CD4-positive, alpha-beta memory T cell (primary cell): ENCODE measurements at regions of chr17 and their contacts with region 1.

Region 1: GRCh38 chr17:48457080-48457836 is 27.2 kb upstream of the SKAP1 start:
- DNase-seq: peak; percentile 78 to 82 (median 81)
- H3K4me3 ChIP-seq: peak overlapping the region in 1 of 2 donors; percentile 16
- H3K4me3 Mint-ChIP-seq: peak overlapping the region; percentile 64 to 86 (median 76)
- H3K27ac ChIP-seq: no peak overlapping the region
- H3K27ac Mint-ChIP-seq: peak overlapping the region in 5 of 7 donors; percentile 47 to 79 (median 69)
- H3K4me1 ChIP-seq: peaks cover 54% of the 10 kb centered on the region
- H3K4me1 Mint-ChIP-seq: peaks cover 39 to 61% (median 46%) of the 10 kb centered on the region in 4 donors
- H3K27me3 ChIP-seq: no peaks in the 10 kb centered on the region
- H3K27me3 Mint-ChIP-seq: peaks cover 0 to 1% of the 10 kb centered on the region in 2 donors

Region 2: GRCh38 chr17:48351831-48352332 is 105.4 kb before region 1 on chr17:
- CTCF ChIA-PET with region 1: interaction called, 77 read pairs
- POLR2A ChIA-PET with region 1: interaction called, 13 read pairs
- intact Hi-C with region 1: loop called (anchors 1 kb)
- DNase-seq: peak in 4 of 5 donors; percentile 31 to 50 (median 43)
- H3K4me3 ChIP-seq: no peak overlapping the region
- H3K4me3 Mint-ChIP-seq: no peak overlapping the region
- H3K27ac ChIP-seq: no peak overlapping the region
- H3K27ac Mint-ChIP-seq: peak overlapping the region in 2 of 7 donors; percentile 35 to 39
- H3K4me1 ChIP-seq: peaks cover 8% of the 10 kb centered on the region
- H3K4me1 Mint-ChIP-seq: peaks cover 5 to 19% (median 8%) of the 10 kb centered on the region in 4 donors
- H3K27me3 ChIP-seq: no peaks in the 10 kb centered on the region
- H3K27me3 Mint-ChIP-seq: no peaks in the 10 kb centered on the region

Region 3: DNA sequence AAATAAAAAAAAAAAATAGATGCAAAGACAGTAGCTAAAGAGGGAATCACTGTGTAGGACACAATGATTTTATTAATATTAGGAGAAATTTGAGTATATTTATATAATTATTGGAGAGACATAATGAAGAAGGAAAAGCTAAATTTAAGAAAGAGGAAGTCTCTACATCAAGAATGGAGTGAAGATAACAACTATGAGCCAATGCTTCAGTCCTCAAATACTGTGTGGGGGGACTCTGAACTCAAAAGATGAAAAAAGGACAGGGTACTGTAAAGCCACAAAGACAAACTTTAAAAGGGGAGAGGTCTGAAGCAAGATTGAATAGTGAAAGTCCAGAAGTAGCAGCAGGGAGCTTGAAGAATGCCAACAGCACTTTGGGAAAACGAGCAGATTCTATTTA is 71.9 kb before region 1 on chr17:
- CTCF ChIA-PET with region 1: interaction called, 10 read pairs
- POLR2A ChIA-PET with region 1: interaction called, 4 read pairs
- intact Hi-C with region 1: no loop called
- DNase-seq: no peak
- H3K4me3 ChIP-seq: no peak overlapping the region
- H3K4me3 Mint-ChIP-seq: no peak overlapping the region
- H3K27ac ChIP-seq: no peak overlapping the region
- H3K27ac Mint-ChIP-seq: peak overlapping the region in 2 of 7 donors; percentile 38 to 78
- H3K4me1 ChIP-seq: peaks cover 63% of the 10 kb centered on the region
- H3K4me1 Mint-ChIP-seq: peaks cover 49 to 75% (median 54%) of the 10 kb centered on the region in 4 donors
- H3K27me3 ChIP-seq: no peaks in the 10 kb centered on the region
- H3K27me3 Mint-ChIP-seq: no peaks in the 10 kb centered on the region

Region 4: DNA sequence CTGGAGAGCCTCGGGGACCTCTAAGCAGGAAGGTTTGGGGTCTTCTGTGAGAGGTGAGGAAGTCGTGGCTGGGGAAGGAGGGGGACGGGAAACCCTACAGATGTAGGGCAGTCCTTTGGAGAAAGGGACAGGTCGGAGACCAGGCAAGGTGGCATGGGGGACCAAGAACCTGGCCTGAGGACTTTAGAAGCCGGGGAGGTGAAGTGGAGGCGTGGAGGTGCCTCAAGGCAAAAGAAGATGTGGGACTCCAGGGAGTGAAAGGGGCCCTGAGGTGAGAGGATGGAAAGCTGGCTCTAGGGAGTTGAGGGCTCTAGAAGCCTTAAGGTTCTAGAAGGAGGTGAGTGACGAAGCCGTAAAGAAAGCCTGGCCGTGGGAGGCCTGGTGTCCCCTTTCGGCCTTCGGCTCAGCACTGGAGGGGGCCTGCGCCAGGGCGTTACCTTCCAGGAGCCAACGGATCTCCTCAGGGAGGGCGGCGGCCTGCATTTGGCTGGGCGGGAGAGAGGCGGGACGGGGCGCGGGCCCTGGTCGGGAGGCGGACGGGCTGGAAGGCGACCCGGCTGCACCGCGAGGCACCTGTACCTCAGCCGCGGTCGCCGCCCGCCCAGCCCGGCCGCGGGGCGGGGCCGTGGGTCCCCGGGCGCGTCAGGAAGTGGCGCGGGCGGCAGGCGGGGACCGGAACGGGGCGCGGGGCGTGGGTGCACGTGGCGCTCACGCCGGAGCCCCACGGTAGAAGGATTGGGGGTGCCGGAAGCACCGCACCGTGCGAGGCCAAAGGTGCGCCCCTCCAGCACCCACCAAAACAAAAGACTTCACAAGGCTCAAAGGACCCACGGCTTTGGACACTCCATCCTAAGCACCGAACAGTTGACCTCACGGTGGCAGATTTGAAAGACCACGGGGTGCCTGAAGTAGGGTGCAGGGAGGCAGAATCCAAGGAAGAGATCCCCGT is 27.3 kb before region 1 on chr17 and contains the start of gene SKAP1:
- CTCF ChIA-PET with region 1: interaction called, 9 read pairs
- POLR2A ChIA-PET with region 1: interaction called, 29 read pairs
- intact Hi-C with region 1: loop called (anchors 1 kb)
- DNase-seq: peak; percentile 68 to 76 (median 71)
- H3K4me3 ChIP-seq: peak within 1 kb of the TSS; percentile 90 to 97
- H3K4me3 Mint-ChIP-seq: peak within 1 kb of the TSS; percentile 91 to 99 (median 97)
- H3K27ac ChIP-seq: peak within 1 kb of the TSS; percentile 89
- H3K27ac Mint-ChIP-seq: peak within 1 kb of the TSS; percentile 95 to 99 (median 97)
- H3K4me1 ChIP-seq: peaks cover 69% of the 10 kb centered on the region
- H3K4me1 Mint-ChIP-seq: peaks cover 62 to 97% (median 77%) of the 10 kb centered on the region in 4 donors
- H3K27me3 ChIP-seq: no peaks in the 10 kb centered on the region
- H3K27me3 Mint-ChIP-seq: no peaks in the 10 kb centered on the region
- total RNA-seq, gene SKAP1: 83.4 to 88.7 TPM